Activated CD8-positive, alpha-beta memory T cell treated with anti-CD3 and anti-CD28 coated beads, Interleukin-2, amount 10 ng/mL, durations not matched to agents 7 days and 5 days (primary cell): ENCODE measurements at regions of chr2 and their contacts with region 1.

Region 1: DNA sequence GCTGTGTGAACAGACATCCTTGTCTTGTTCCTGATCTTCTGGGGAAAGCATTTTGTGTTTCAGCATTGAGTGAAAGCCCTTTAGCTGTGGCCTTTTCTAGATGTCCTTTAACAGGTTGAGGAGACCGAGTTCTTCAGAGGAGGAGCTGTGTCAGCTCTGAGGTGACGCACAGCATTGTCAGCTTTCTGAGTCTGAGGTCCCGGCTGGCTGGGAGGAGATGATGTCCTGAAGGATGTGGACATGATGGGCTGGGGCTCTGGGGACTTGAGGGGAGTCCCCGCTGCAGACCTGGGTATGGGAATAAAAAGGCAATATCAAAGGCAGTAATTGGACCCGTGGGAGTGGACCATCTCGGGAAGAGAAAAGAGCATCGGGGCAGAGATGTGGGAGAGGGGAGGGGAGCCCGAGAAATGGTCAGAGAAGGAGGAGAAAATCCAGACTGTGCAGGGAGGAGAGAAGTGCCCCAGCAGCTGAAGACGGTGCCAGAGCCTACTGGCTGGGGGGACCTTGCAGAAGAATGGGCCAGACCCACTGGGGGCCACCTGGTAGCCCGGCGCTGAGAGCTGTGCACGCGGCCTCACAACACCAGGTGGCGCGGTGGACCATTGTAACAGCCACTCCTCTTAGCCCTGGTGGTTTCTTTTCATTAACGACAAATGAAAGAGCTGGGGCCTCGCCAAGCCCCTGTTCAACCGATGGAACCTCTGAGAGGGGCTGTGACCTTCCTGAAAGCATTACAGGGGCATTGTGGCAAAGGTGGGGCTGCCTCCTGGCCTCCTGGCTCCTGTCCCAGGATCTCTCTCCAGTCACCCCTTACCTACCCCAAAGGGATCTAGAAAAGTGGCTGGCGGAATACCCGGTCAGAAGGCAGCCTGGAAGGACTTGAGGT is 61.6 kb downstream of the ST3GAL5 start:
- DNase-seq: peak; percentile 89
- ATAC-seq: peak; percentile 98
- H3K4me3 Mint-ChIP-seq: no peak overlapping the region
- H3K27ac Mint-ChIP-seq: peak overlapping the region; percentile 74
- H3K4me1 Mint-ChIP-seq: peaks cover 35% of the 10 kb centered on the region
- H3K27me3 Mint-ChIP-seq: peaks cover 18% of the 10 kb centered on the region

Region 2: DNA sequence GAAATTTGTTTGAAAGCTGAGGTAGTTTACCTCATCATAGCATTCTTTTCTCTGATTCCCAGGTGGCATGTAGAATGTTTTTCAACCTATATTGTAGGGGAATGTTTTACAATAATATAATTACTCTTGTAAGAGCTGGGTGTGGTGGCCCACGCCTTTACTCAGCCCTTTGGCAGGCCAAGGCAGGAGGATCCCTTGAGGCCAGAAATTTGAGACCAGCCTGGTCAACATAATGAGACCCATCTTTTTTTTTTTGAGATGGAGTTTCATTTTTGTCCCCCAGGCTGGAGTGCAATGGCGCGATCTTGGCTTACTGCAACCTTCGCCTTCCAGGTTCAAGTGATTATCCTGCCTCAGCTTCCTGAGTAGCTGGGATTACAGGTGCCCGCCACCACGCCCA is 207.6 kb before region 1 on chr2:
- CTCF ChIA-PET with region 1: no interaction called
- DNase-seq: no peak
- ATAC-seq: no peak
- H3K4me3 Mint-ChIP-seq: no peak overlapping the region
- H3K27ac Mint-ChIP-seq: peak overlapping the region; percentile 59
- H3K4me1 Mint-ChIP-seq: peaks cover 36% of the 10 kb centered on the region
- H3K27me3 Mint-ChIP-seq: no peaks in the 10 kb centered on the region

Region 3: DNA sequence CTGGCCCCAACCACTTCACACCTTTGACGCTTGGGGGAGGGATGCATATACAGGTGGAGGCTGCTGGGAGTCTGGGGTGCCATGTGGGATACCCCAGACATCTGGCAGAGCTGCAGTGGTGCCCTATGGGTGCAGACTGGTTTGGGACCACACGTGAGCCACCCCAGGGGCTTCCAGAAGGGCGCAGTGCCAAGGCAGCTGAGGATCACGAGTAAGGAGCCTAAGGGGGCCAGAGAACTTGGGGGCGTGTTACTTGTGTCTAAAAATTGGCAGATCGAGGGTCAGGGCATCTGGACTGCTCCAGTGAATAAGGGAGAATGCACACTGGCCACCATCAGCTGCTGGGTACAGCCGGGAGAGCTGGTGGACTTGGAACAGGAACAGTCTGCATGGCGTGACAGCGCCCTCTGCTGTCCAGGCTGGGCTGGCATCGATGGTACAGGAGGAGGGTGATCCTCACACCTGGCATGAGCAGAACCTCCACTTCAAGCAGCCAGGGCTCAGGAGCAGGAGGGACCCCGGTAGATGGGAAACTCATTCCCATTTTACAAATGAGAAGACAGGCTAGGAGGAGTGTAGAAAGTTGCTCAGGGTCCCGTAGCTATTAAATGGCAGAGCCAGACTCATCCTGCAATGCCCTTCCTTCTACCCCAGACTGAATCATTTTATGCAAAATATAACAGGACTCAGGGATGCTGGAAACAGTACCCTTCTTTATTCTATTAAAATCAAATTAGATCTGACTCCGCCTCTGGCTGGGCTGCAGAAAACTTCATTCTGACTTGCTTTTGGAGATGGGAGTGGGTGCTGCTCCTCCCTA is 13.0 kb before region 1 on chr2:
- CTCF ChIA-PET with region 1: interaction called, 30 read pairs
- DNase-seq: peak; percentile 89
- ATAC-seq: peak; percentile 98
- H3K4me3 Mint-ChIP-seq: no peak overlapping the region
- H3K27ac Mint-ChIP-seq: no peak overlapping the region
- H3K4me1 Mint-ChIP-seq: no peaks in the 10 kb centered on the region
- H3K27me3 Mint-ChIP-seq: peaks cover 26% of the 10 kb centered on the region

Region 4: GRCh38 chr2:85852937-85853498 is 25.8 kb after region 1 on chr2:
- CTCF ChIA-PET with region 1: interaction called, 99 read pairs
- DNase-seq: peak; percentile 89
- ATAC-seq: peak; percentile 85
- H3K4me3 Mint-ChIP-seq: peak overlapping the region; percentile 82
- H3K27ac Mint-ChIP-seq: peak overlapping the region; percentile 99
- H3K4me1 Mint-ChIP-seq: peaks cover 76% of the 10 kb centered on the region
- H3K27me3 Mint-ChIP-seq: no peaks in the 10 kb centered on the region

Region 5: GRCh38 chr2:85888684-85889626 is 61.7 kb after region 1 on chr2 and contains the start of gene ST3GAL5:
- CTCF ChIA-PET with region 1: interaction called, 187 read pairs
- DNase-seq: peak; percentile 93
- ATAC-seq: peak; percentile 89
- H3K4me3 Mint-ChIP-seq: peak within 1 kb of the TSS; percentile 82
- H3K27ac Mint-ChIP-seq: peak within 1 kb of the TSS; percentile 86
- H3K4me1 Mint-ChIP-seq: peaks cover 72% of the 10 kb centered on the region
- H3K27me3 Mint-ChIP-seq: no peaks in the 10 kb centered on the region
- total RNA-seq, gene ST3GAL5: 73.9 to 74.0 TPM

Region 6: GRCh38 chr2:86072271-86072858 is 245.1 kb after region 1 on chr2:
- CTCF ChIA-PET with region 1: interaction called, 391 read pairs
- DNase-seq: no peak
- ATAC-seq: no peak
- H3K4me3 Mint-ChIP-seq: no peak overlapping the region
- H3K27ac Mint-ChIP-seq: peak overlapping the region; percentile 58
- H3K4me1 Mint-ChIP-seq: peaks cover 33% of the 10 kb centered on the region
- H3K27me3 Mint-ChIP-seq: no peaks in the 10 kb centered on the region

Region 7: GRCh38 chr2:86105252-86105968 is 278.2 kb after region 1 on chr2 and contains the start of gene POLR1A:
- CTCF ChIA-PET with region 1: interaction called, 16 read pairs
- DNase-seq: peak; percentile 92
- ATAC-seq: peak; percentile 77
- H3K4me3 Mint-ChIP-seq: peak within 1 kb of the TSS; percentile 93
- H3K27ac Mint-ChIP-seq: peak within 1 kb of the TSS; percentile 97
- H3K4me1 Mint-ChIP-seq: peaks cover 56% of the 10 kb centered on the region
- H3K27me3 Mint-ChIP-seq: no peaks in the 10 kb centered on the region
- total RNA-seq, gene POLR1A: 38.2 to 51.2 TPM